H1 (cell line): ENCODE measurements at regions of chr12 and their contacts with region 1.

Region 1: GRCh38 chr12:51886021-51886322 is 1.9 kb upstream of the ANKRD33 start:
- DNase-seq: no peak
- H3K4me3 ChIP-seq: no peak overlapping the region
- H3K27ac ChIP-seq: no peak overlapping the region
- H3K4me1 ChIP-seq: peaks cover 0 to 12% (median 5%) of the 10 kb centered on the region in 4 experiments; a peak in 6 of 7 replicates
- H3K27me3 ChIP-seq: peaks cover 0 to 10% (median 6%) of the 10 kb centered on the region in 4 experiments; a peak in 3 of 7 replicates
- CTCF ChIP-seq: no peak
- EP300 ChIP-seq: no peak
- POLR2A ChIP-seq: no peak
- RAD21 ChIP-seq: no peak

Region 2: DNA sequence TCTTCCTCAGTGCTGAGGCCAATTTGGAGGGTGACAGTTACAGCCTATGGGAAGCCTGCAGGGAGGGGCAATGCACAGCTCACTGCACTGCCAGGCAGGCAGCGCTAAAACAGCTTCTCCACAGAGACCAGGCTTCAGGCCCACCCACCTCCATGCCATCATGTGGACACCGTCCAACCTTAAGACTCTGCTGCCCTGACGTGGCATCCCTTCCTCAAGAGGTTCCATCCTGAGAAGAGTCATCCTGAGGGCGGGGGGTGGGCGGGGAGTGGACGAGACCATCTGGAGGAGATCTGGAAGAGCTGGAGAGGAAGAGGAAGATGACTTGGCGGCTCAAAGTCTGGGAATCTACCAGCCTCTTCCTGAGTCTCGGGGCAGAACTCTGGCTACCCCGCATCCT is 13.0 kb after region 1 on chr12:
- CTCF ChIA-PET with region 1: interaction called, 12 read pairs
- POLR2A ChIA-PET with region 1: no interaction called
- DNase-seq: no peak
- H3K4me3 ChIP-seq: no peak overlapping the region
- H3K27ac ChIP-seq: no peak overlapping the region
- H3K4me1 ChIP-seq: no peaks in the 10 kb centered on the region
- H3K27me3 ChIP-seq: no peaks in the 10 kb centered on the region
- CTCF ChIP-seq: no peak
- EP300 ChIP-seq: no peak
- POLR2A ChIP-seq: no peak
- RAD21 ChIP-seq: no peak